Naive thymus-derived CD4-positive, alpha-beta T cell (primary cell): ENCODE measurements at regions of chrX and their contacts with region 1.

Region 1: GRCh38 chrX:386768-387575 is at the start of gene PPP2R3B:
- DNase-seq: peak; percentile 98 to 100 (median 99)
- ATAC-seq: peak; percentile 93
- H3K4me3 ChIP-seq: peak within 1 kb of the TSS; percentile 99
- H3K4me3 Mint-ChIP-seq: peak within 1 kb of the TSS; percentile 84 to 96 (median 93)
- H3K27ac ChIP-seq: peak within 1 kb of the TSS; percentile 100
- H3K27ac Mint-ChIP-seq: peak within 1 kb of the TSS; percentile 96 to 99 (median 99)
- H3K4me1 ChIP-seq: peaks cover 4 to 5% of the 10 kb centered on the region in 2 donors
- H3K4me1 Mint-ChIP-seq: peaks cover 0 to 20% (median 9%) of the 10 kb centered on the region in 7 donors
- H3K27me3 ChIP-seq: no peaks in the 10 kb centered on the region
- H3K27me3 Mint-ChIP-seq: peaks cover 0 to 5% (median 0%) of the 10 kb centered on the region in 5 donors
- total RNA-seq, gene PPP2R3B: 24.9 to 53.5 (median 32.5) TPM

Region 2: DNA sequence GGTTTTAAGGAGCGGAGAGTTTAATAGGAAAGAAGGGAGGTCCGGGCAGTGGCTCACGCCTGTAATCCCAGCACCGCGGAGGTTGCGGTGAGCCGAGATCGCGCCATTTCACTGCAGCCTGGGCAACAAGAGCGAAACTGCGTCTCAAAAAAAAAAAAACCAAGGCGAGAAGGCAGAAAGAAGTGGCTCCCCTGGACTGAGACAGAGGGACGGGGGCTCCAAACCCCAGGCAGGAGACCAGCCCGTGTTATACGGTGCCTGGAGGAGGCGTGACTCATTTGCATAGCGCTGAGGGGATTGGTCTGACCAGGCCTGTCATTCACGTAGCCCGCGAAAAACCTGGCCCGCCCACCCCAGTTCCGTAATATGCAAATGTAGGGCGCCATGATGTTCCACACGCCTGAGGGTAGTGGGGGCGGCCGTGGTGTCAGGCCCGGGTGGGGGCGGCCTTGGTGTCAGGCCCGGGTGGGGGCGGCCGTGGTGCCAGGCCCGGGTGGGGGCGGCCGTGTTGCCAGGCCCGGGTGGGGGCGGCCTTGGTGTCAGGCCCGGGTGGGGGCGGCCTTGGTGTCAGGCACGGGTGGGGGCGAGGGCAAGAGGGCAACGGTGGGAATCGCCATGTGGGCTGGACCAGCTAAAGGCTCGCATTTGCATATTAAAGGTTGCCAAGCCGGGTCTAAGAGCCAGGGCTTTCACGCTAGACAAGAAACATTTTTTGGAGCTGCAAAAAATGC is 103.7 kb before region 1 on chrX:
- CTCF ChIA-PET with region 1: no interaction called
- POLR2A ChIA-PET with region 1: no interaction called
- intact Hi-C with region 1: loop called (anchors 1 kb)
- DNase-seq: peak; percentile 62 to 92 (median 86)
- ATAC-seq: peak; percentile 100
- H3K4me3 ChIP-seq: peak overlapping the region; percentile 61
- H3K4me3 Mint-ChIP-seq: peak overlapping the region; percentile 75 to 99 (median 94)
- H3K27ac ChIP-seq: peak overlapping the region; percentile 65
- H3K27ac Mint-ChIP-seq: peak overlapping the region; percentile 74 to 98 (median 87)
- H3K4me1 ChIP-seq: peaks cover 3 to 9% of the 10 kb centered on the region in 2 donors
- H3K4me1 Mint-ChIP-seq: peaks cover 19 to 45% (median 36%) of the 10 kb centered on the region in 7 donors
- H3K27me3 ChIP-seq: no peaks in the 10 kb centered on the region
- H3K27me3 Mint-ChIP-seq: peaks cover 0 to under 1% (median 0%) of the 10 kb centered on the region in 5 donors

Region 3: GRCh38 chrX:318739-319578 is 68.0 kb before region 1 on chrX and contains the start of gene GTPBP6:
- CTCF ChIA-PET with region 1: no interaction called
- POLR2A ChIA-PET with region 1: no interaction called
- intact Hi-C with region 1: loop called (anchors 1 kb)
- DNase-seq: peak; percentile 93 to 100 (median 99)
- ATAC-seq: peak; percentile 80
- H3K4me3 ChIP-seq: peak within 1 kb of the TSS; percentile 70
- H3K4me3 Mint-ChIP-seq: peak within 1 kb of the TSS in 9 of 10 donors; percentile 85 to 98 (median 92)
- H3K27ac ChIP-seq: peak within 1 kb of the TSS; percentile 95
- H3K27ac Mint-ChIP-seq: peak within 1 kb of the TSS; percentile 93 to 100 (median 98)
- H3K4me1 ChIP-seq: peaks cover 15 to 16% of the 10 kb centered on the region in 2 donors
- H3K4me1 Mint-ChIP-seq: peaks cover 8 to 34% (median 25%) of the 10 kb centered on the region in 7 donors
- H3K27me3 ChIP-seq: no peaks in the 10 kb centered on the region
- H3K27me3 Mint-ChIP-seq: peaks cover 0 to 3% (median 0%) of the 10 kb centered on the region in 5 donors
- total RNA-seq, gene GTPBP6: 52.1 to 95.2 (median 75.1) TPM

Region 4: GRCh38 chrX:331151-331774 is 55.7 kb before region 1 on chrX:
- CTCF ChIA-PET with region 1: no interaction called
- POLR2A ChIA-PET with region 1: no interaction called
- intact Hi-C with region 1: loop called in 1 of 2 experiments (anchors 2 kb)
- DNase-seq: peak in 3 of 9 donors; percentile 5 to 32 (median 20)
- ATAC-seq: peak; percentile 63
- H3K4me3 ChIP-seq: peak overlapping the region; percentile 39
- H3K4me3 Mint-ChIP-seq: peak overlapping the region in 6 of 10 donors; percentile 6 to 76 (median 55)
- H3K27ac ChIP-seq: no peak overlapping the region
- H3K27ac Mint-ChIP-seq: no peak overlapping the region
- H3K4me1 ChIP-seq: peaks cover 0 to 11% of the 10 kb centered on the region in 2 donors
- H3K4me1 Mint-ChIP-seq: peaks cover 0 to 5% (median 0%) of the 10 kb centered on the region in 7 donors
- H3K27me3 ChIP-seq: no peaks in the 10 kb centered on the region
- H3K27me3 Mint-ChIP-seq: peaks cover 0 to 4% (median 0%) of the 10 kb centered on the region in 5 donors

Region 5: DNA sequence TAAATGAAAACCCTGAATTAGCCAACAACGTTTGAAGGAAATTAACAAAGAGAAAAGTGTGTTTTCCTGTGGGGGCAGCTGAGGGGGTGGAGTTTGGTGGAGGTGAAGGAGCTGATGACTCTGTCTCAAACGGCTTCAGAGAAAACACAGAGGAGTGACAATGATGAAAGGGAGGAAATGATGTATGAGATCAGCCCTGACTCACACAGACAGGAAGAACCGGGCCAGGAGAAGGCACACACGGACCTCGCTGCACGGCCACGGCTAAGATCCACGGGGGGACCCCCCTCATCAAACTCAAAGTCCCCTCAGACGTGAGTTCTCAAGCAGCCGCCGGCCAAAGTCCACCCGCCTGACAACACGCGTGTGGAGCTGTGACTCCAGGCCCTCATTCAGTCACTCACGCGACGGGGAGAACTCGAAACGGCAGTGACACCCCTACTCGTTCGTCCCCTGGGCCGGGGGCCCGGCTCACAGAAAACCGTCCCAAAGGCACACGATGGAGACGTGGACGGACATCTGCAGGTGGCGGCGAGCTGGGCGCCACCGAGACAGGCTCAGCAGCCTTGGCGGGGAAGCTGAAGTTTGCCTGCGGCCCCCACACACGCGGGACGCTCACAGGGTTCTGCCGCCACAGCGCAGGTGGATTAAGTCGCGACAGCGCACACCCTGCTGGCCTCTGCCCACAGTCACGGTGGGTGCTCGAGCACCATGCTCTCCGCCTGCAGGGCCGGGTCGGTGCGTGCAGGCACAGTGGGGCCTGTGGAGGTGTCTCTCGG is 29.1 kb before region 1 on chrX:
- CTCF ChIA-PET with region 1: no interaction called
- POLR2A ChIA-PET with region 1: no interaction called
- intact Hi-C with region 1: loop called (anchors 1 to 2 kb)
- DNase-seq: peak in 7 of 9 donors; percentile 60 to 82 (median 76)
- ATAC-seq: peak; percentile 92
- H3K4me3 ChIP-seq: no peak overlapping the region
- H3K4me3 Mint-ChIP-seq: peak overlapping the region; percentile 35 to 81 (median 72)
- H3K27ac ChIP-seq: peak overlapping the region; percentile 71
- H3K27ac Mint-ChIP-seq: peak overlapping the region; percentile 86 to 99 (median 96)
- H3K4me1 ChIP-seq: peaks cover 0 to 19% of the 10 kb centered on the region in 2 donors
- H3K4me1 Mint-ChIP-seq: peaks cover 16 to 32% (median 30%) of the 10 kb centered on the region in 7 donors
- H3K27me3 ChIP-seq: no peaks in the 10 kb centered on the region
- H3K27me3 Mint-ChIP-seq: no peaks in the 10 kb centered on the region

Region 6: GRCh38 chrX:373637-374471 is 13.1 kb before region 1 on chrX:
- CTCF ChIA-PET with region 1: no interaction called
- POLR2A ChIA-PET with region 1: no interaction called
- intact Hi-C with region 1: loop called in 1 of 2 experiments (anchors 1 kb)
- DNase-seq: peak in 7 of 9 donors; percentile 16 to 51 (median 35)
- ATAC-seq: peak; percentile 68
- H3K4me3 ChIP-seq: no peak overlapping the region
- H3K4me3 Mint-ChIP-seq: peak overlapping the region; percentile 71 to 87 (median 80)
- H3K27ac ChIP-seq: no peak overlapping the region
- H3K27ac Mint-ChIP-seq: peak overlapping the region in 1 of 9 donors; percentile 60
- H3K4me1 ChIP-seq: peaks cover 0 to 15% of the 10 kb centered on the region in 2 donors
- H3K4me1 Mint-ChIP-seq: peaks cover 24 to 48% (median 37%) of the 10 kb centered on the region in 7 donors
- H3K27me3 ChIP-seq: peaks cover 0 to 8% of the 10 kb centered on the region in 2 donors
- H3K27me3 Mint-ChIP-seq: peaks cover 24 to 43% (median 34%) of the 10 kb centered on the region in 5 donors

Region 7: GRCh38 chrX:499870-500364 is 112.9 kb after region 1 on chrX:
- CTCF ChIA-PET with region 1: no interaction called
- POLR2A ChIA-PET with region 1: no interaction called
- intact Hi-C with region 1: no loop called
- DNase-seq: no peak
- ATAC-seq: no peak
- H3K4me3 ChIP-seq: no peak overlapping the region
- H3K4me3 Mint-ChIP-seq: peak overlapping the region in 2 of 10 donors; percentile 11 to 45
- H3K27ac ChIP-seq: no peak overlapping the region
- H3K27ac Mint-ChIP-seq: no peak overlapping the region
- H3K4me1 ChIP-seq: no peaks in the 10 kb centered on the region
- H3K4me1 Mint-ChIP-seq: peaks cover 0 to 7% (median 6%) of the 10 kb centered on the region in 7 donors
- H3K27me3 ChIP-seq: peaks cover 0 to 4% of the 10 kb centered on the region in 2 donors
- H3K27me3 Mint-ChIP-seq: peaks cover 3 to 48% (median 24%) of the 10 kb centered on the region in 5 donors

Region 8: DNA sequence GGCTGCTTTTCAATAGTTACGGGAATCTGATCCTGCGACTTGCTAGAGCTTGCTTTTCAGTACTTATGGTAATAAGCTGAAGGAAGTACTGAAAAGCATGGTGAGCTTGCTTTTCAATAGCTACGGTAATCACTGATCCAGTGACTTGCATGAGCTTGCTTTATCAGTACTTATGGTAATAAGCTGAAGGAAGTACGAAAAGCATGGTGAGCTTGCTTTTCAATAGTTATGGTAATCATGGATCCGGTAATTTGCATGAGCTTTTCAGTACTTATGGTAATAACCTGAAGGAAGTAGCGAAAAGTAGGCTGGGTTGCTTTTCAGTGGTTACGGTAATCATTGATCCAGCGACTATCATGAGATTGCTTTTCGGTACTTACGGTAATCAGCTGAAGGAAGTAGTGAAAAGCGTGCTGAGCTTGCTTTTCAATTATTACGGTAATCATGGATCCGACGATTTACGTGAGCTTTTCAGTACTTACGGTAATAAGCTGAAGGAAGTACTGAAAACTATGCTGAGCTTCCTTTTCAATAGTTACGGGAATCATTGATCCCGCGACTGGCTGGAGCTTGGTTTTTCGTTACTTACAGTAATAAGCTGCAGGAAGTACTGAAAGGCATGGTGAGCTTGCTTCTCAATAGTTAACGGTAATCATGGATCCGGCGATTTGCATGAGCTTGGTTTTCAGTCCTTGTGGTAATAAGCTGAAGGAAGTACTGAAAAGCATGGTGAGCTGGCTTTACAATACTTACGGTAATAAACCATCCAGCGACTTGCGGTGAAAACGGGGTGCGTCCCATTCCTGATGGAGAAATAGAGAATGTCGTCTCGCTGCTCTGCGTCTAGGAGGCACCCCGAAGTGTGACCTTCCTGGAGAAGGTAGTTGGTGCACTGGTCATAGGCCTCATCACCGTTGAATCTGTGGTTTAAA is 819.0 kb after region 1 on chrX:
- CTCF ChIA-PET with region 1: no interaction called
- POLR2A ChIA-PET with region 1: no interaction called
- intact Hi-C with region 1: loop called (anchors 1 to 2 kb)
- DNase-seq: peak; percentile 14 to 77 (median 69)
- ATAC-seq: peak; percentile 70
- H3K4me3 ChIP-seq: peak overlapping the region; percentile 56
- H3K4me3 Mint-ChIP-seq: peak overlapping the region; percentile 76 to 87 (median 83)
- H3K27ac ChIP-seq: no peak overlapping the region
- H3K27ac Mint-ChIP-seq: peak overlapping the region in 7 of 9 donors; percentile 22 to 68 (median 36)
- H3K4me1 ChIP-seq: peaks cover 6 to 11% of the 10 kb centered on the region in 2 donors
- H3K4me1 Mint-ChIP-seq: peaks cover 15 to 42% (median 32%) of the 10 kb centered on the region in 7 donors
- H3K27me3 ChIP-seq: no peaks in the 10 kb centered on the region
- H3K27me3 Mint-ChIP-seq: no peaks in the 10 kb centered on the region